Activated CD4-positive, alpha-beta memory T cell treated with anti-CD3 and anti-CD28 coated beads, Interleukin-2, amount 10 ng/mL, durations not matched to agents 7 days and 5 days (primary cell): ENCODE measurements at regions of chr11 and their contacts with region 1.

Region 1: GRCh38 chr11:62573592-62574362 is at the start of gene EEF1G:
- DNase-seq: peak; percentile 99
- H3K4me3 Mint-ChIP-seq: peak within 1 kb of the TSS; percentile 94
- H3K27ac Mint-ChIP-seq: peak within 1 kb of the TSS; percentile 91
- H3K4me1 Mint-ChIP-seq: peaks cover 58% of the 10 kb centered on the region
- H3K27me3 Mint-ChIP-seq: no peaks in the 10 kb centered on the region
- total RNA-seq, gene EEF1G: 991 to 999 TPM

Region 2: GRCh38 chr11:62353844-62354243 is 219.9 kb before region 1 on chr11:
- CTCF ChIA-PET with region 1: no interaction called
- POLR2A ChIA-PET with region 1: no interaction called
- DNase-seq: no peak
- H3K4me3 Mint-ChIP-seq: no peak overlapping the region
- H3K27ac Mint-ChIP-seq: no peak overlapping the region
- H3K4me1 Mint-ChIP-seq: peaks cover 9% of the 10 kb centered on the region
- H3K27me3 Mint-ChIP-seq: no peaks in the 10 kb centered on the region

Region 3: GRCh38 chr11:62542750-62543567 is 30.8 kb before region 1 on chr11:
- CTCF ChIA-PET with region 1: interaction called, 14 read pairs
- POLR2A ChIA-PET with region 1: interaction called, 30 read pairs
- DNase-seq: peak; percentile 80
- H3K4me3 Mint-ChIP-seq: peak overlapping the region; percentile 100
- H3K27ac Mint-ChIP-seq: peak overlapping the region; percentile 93
- H3K4me1 Mint-ChIP-seq: peaks cover 76% of the 10 kb centered on the region
- H3K27me3 Mint-ChIP-seq: peaks cover 4% of the 10 kb centered on the region

Region 4: GRCh38 chr11:62601394-62602140 is 27.8 kb after region 1 on chr11 and contains the start of gene MTA2:
- CTCF ChIA-PET with region 1: interaction called, 6 read pairs
- POLR2A ChIA-PET with region 1: interaction called, 13 read pairs
- DNase-seq: peak; percentile 100
- H3K4me3 Mint-ChIP-seq: peak within 1 kb of the TSS; percentile 85
- H3K27ac Mint-ChIP-seq: peak within 1 kb of the TSS; percentile 88
- H3K4me1 Mint-ChIP-seq: peaks cover 53% of the 10 kb centered on the region
- H3K27me3 Mint-ChIP-seq: no peaks in the 10 kb centered on the region
- total RNA-seq, gene MTA2: 226 TPM

Region 5: DNA sequence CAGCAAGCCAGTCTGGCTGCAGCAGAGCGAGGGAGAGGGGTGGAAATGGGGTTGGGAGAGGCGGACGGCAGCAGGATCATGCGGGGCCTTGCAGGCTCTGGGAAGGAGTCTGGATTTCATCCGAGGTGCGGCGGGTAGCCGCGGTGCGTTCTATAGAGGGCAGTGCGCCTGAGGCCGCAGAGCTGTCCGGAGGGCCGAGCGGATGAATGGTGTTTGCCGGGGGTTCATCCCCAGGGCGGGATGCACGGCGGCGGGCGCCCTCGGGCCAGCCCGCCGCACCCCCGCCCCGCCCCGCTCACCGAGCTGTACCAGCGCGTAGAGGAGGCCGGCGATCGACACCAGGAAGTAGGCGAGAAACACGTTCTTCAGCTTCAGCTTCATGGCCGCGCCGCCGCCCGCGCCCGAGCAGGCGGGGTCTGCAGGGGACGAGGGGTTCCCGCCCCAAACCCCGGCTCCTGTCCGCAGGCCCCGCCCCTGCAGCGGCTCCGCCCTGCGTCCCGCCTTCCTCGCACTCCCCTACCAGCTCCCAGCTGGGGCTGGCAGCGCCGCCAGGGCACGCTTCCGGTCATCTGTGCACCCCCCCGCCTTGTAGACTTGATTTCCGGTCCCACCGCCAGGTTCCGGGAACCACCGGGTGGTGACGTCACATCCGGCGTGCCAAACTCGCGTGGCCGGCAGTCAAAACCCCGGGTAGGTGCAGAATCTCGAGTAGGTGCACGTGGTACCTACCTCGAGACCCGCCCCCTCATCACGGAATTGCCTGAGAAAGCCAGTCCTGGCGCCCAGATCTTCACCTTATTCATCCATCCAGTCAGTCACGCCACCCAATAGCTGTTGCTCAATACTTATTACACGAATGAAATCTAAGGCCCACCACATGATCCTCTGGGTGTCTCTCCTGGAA is 48.0 kb after region 1 on chr11 and contains the start of gene B3GAT3:
- CTCF ChIA-PET with region 1: no interaction called
- POLR2A ChIA-PET with region 1: interaction called, 22 read pairs
- DNase-seq: peak; percentile 97
- H3K4me3 Mint-ChIP-seq: peak within 1 kb of the TSS; percentile 87
- H3K27ac Mint-ChIP-seq: peak within 1 kb of the TSS; percentile 98
- H3K4me1 Mint-ChIP-seq: peaks cover 29% of the 10 kb centered on the region
- H3K27me3 Mint-ChIP-seq: no peaks in the 10 kb centered on the region
- total RNA-seq, gene B3GAT3: 58.9 to 67.1 TPM

Region 6: DNA sequence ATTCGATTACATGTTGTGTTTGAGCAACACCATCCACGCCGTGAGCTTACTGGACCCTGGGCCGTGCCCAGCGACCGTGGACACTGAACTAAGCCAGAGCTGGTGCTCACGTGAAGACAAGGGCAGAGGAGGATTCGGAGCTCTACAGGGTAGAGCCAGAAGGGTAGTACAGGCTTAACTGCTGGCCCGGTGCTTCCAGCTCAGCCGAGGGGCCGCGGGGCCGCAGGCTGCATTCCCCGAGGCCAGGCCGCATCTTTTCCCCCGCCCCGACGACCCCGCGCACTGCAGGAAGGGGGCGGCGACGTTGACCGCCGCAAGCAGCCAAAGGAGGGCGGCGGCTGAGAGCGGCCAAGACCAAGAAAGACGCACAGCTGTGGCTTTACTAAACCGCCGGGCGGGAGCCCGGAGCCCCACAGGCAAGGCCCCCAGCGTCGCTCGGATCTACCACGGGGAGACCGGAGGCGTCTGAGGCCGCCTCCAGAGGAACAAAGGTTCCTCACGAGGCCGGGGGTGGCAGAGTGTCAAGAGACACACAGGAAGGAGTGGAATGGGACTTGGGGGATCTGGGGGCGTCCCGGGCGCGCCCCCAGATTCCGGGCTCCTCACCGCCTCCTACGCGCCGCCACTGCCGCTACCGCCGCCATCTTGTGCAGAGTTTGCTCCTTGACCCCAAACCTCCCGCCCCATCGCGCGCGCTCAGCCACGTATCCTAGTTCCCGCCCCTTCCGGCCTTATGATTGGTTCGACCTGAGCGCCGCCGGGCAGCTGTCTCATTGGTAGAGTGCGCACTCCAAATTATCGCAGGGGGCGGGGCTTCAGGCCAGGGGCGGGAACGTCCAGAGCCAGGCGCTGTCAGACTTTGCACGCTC is 72.4 kb after region 1 on chr11 and contains the start of gene GANAB:
- CTCF ChIA-PET with region 1: no interaction called
- POLR2A ChIA-PET with region 1: interaction called, 12 read pairs
- DNase-seq: peak; percentile 99
- H3K4me3 Mint-ChIP-seq: peak within 1 kb of the TSS; percentile 99
- H3K27ac Mint-ChIP-seq: peak within 1 kb of the TSS; percentile 94
- H3K4me1 Mint-ChIP-seq: peaks cover 47% of the 10 kb centered on the region
- H3K27me3 Mint-ChIP-seq: no peaks in the 10 kb centered on the region
- total RNA-seq, gene GANAB: 278 to 284 TPM

Region 7: DNA sequence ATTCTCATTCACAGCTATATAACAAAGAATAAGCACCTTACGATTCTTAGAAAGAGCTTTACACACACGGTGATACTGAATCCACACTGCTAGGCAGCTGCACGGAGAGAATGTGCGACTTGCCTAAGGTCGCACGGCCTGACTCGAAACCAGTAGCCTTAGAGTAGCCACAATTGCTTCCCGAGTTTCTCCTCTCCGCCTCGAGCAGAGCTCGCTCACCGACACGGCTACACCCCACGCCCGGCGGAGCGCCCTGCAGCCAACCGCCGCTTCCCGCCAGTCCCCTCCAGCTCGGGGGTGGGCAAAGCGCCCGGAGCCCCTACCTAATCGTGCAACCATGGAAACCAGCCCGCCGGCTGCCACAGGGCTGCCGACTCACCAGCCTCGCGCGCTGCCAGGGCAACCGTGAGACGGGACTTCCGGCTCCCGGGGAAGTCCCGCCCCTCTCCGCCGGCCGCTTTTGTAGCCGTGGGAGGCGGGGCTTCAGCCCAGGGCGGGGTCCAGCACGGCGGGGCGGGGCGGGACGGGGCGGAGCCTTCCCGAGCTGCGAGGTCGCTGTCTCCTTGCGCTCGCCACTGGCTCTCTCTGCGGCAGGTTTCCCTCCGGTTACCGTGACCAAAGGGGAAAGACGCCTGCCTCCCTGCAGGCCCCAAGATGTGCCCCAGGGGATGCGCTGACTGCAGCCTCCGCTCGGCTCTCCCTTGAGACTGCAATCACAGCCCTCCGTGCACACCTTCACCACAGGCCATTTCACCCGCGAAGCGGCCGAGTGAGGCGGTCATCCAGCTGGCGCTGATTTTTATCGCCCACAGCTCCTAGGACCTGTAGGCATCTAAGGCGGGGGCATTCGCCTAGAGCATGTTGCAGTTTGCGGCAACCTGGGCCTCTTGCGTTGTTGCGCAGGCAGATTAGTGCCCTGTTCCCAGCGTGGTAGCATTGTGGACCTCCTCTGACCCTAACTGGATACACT is 132.4 kb after region 1 on chr11:
- CTCF ChIA-PET with region 1: no interaction called
- POLR2A ChIA-PET with region 1: interaction called, 11 read pairs
- DNase-seq: peak; percentile 96
- H3K4me3 Mint-ChIP-seq: peak overlapping the region; percentile 92
- H3K27ac Mint-ChIP-seq: peak overlapping the region; percentile 69
- H3K4me1 Mint-ChIP-seq: peaks cover 56% of the 10 kb centered on the region
- H3K27me3 Mint-ChIP-seq: no peaks in the 10 kb centered on the region

Region 8: DNA sequence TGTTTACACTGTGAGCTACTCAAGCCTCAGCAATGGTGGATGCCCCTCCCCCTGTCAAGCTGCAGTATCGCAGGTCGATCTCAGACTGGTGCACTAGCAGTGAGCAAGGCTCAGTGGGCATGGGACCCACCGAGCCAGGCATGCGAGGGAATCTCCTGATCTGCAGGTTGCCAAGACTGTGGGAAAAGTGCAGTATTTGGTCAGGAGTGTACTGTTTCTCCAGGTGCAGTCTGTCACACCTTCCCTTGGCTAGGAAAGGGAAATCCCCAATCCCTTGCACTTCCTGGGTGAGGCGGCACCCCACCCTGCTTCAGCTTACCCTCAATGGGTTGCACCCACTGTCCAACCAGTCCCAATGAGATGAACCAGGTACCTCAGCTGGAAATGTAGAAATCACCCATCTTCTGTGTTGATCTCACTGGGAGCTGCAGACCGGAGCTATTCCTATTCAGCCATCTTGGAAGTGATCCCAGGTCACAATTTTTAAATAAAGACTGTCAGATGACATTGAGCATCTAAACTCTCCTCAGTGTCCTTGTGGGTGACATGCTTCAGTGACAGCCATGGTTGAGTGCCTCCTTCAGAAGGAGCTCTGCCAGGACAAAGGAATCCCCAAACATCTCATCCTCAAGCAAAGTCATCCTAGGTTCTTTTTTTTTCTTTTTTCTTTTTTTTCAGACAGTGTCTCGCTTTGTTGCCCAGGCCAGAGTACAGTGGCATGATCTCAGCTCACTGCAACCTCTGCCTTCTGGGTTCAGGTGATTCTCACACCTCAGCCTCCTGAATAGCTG is 559.4 kb after region 1 on chr11:
- CTCF ChIA-PET with region 1: no interaction called
- POLR2A ChIA-PET with region 1: no interaction called
- DNase-seq: no peak
- H3K4me3 Mint-ChIP-seq: no peak overlapping the region
- H3K27ac Mint-ChIP-seq: no peak overlapping the region
- H3K4me1 Mint-ChIP-seq: no peaks in the 10 kb centered on the region
- H3K27me3 Mint-ChIP-seq: peaks cover 6% of the 10 kb centered on the region